Posterior vena cava (tissue), 2 donors: ENCODE measurements at regions of chr16 and their contacts with region 1.

Region 1: DNA sequence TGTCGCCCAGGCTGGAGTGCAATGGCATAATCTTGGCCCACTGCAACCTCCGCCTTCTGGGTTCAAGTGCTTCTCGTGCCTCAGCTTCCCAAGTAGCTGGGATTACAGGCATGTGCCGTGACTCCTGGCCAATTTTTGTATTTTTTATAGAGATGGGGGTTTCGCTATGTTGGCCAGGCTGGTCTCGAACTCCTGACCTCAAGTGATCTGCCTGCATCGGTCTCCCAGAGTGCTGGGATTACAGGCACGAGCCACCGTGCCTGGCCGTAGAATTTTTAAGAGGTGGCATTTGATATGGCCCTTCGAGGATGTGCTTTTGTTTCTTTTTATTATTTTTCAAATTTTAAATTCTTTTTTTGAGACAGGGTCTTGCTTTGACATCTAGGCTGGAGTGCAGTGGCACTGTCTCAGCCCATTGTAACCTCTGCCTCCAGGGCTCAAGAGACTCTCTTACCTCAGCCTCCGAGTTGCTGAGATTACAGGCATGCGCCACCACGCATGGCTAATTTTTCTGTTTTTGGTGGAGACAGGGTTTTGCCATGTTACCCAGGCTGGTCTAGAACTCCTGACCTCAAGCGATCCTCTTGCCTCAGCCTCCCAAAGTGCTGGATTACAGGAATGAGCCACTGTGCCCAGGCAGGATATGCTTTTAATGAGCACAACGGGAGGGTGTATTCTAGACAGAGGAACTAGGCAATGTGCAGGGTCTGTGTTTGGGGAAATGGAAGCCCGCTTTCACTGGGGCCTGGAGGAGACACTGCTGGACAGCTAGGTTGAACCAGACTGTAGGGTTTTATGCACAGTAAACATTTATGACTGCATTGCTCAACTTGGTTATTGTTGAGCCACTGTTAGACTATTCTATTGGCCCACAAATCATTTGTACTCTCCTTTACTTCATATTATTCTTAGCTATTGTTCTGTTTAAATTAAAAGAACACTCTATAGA is 9.9 kb upstream of the SIAH1 start:
- DNase-seq: no peak

Region 2: DNA sequence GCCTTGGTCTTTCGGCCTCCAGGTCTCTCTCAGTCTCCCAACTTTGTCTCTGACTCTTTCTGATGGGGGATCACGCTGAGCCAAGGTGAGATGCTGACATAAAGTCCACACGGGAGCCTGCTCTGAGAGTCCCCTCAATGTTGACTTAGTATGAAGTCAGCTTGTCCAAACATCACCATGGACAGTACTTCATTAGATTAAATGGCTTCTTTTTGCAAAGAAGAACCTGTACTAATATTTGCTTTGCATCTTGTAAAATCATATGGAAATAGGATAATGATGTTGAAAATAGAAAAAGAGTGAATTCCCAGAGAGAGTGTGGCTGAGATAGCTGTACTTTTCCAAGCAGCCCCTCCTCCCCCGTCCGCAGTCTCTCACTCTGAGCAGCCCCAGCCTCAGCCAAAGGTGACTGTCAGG is 46.8 kb after region 1 on chr16:
- intact Hi-C with region 1: loop called in 1 of 2 experiments (anchors 2 kb)
- DNase-seq: no peak